ENCODE measurements at regions of chr15 and their contacts with region 1.

Region 1: GRCh38 chr15:63414474-63415120 is 33.0 kb upstream of the CA12 start:
- DNase-seq: no peak
- ATAC-seq: no peak
- H3K4me3 ChIP-seq: no peak overlapping the region
- H3K27ac ChIP-seq: no peak overlapping the region
- H3K4me1 ChIP-seq: no peaks in the 10 kb centered on the region
- H3K27me3 ChIP-seq: peaks cover 0 to 4% (median 0%) of the 10 kb centered on the region in 7 donors
- CTCF ChIP-seq: no peak

Region 2: DNA sequence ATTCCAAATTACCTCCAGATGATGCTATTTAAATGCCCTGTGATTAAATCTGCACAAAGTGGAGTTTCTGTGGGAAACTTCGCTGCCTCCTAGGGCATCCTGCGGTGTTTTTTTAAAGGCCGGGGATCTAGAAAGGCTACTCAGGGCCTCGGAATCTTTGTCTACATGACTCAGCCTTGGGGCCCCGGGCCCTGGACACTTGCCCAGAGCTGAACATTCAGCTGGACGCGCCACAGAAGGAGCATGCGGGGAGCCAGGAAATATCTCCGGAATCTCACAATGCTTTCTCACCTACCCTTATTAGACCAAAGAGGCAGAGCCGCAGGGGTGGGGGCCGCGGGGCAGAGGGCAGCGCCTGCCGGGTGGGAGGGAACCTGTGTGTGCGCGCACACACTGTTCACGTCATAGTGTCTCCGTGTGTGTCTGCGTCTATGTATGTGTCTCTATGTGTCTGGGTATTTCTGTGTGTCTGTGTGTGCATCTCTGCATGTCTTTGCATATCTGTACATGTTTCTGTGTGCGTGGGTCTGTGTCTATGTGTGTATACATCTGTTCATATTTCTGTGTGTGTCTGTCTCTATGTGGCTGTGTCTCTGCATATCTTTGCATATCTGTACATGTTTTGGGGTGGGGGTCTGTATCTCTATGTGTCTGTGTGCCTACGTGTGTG is 517.5 kb before region 1 on chr15:
- intact Hi-C with region 1: no loop called
- DNase-seq: peak; percentile 89 to 93
- ATAC-seq: peak; percentile 81 to 91 (median 86)
- H3K4me3 ChIP-seq: peak overlapping the region in 5 of 10 donors; percentile 5 to 21 (median 16)
- H3K27ac ChIP-seq: peak overlapping the region; percentile 66 to 93 (median 88)
- H3K4me1 ChIP-seq: peaks cover 10 to 76% (median 59%) of the 10 kb centered on the region in 9 donors
- H3K27me3 ChIP-seq: no peaks in the 10 kb centered on the region
- CTCF ChIP-seq: no peak

Region 3: GRCh38 chr15:63296195-63296594 is 118.4 kb before region 1 on chr15:
- intact Hi-C with region 1: no loop called
- DNase-seq: no peak
- ATAC-seq: peak in 4 of 8 donors; percentile 51 to 74 (median 61)
- H3K4me3 ChIP-seq: no peak overlapping the region
- H3K27ac ChIP-seq: no peak overlapping the region
- H3K4me1 ChIP-seq: peaks cover 0 to 21% (median 6%) of the 10 kb centered on the region in 9 donors
- H3K27me3 ChIP-seq: no peaks in the 10 kb centered on the region
- CTCF ChIP-seq: no peak

Region 4: DNA sequence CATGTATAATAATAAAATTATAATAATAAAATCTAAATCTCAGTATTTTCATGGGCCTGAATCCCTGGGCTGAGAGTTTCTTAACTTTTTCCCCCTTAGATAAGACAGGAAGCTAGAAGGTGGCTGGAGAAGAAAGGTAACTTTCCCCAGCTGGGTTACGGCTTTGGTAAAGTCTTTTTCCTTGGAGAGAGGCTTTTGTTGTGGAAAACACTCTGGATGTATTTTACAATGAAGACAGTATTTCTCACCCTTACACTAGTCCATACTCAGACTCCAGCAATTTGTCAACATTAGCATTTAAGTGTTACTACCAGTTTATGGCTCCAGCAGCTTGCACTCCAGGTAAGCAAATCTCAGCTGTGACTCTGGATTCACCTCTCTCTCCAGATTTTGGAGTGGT is 102.3 kb before region 1 on chr15:
- intact Hi-C with region 1: loop called in 1 of 10 experiments (anchors 5 kb)
- DNase-seq: no peak
- ATAC-seq: no peak
- H3K4me3 ChIP-seq: no peak overlapping the region
- H3K27ac ChIP-seq: no peak overlapping the region
- H3K4me1 ChIP-seq: peaks cover 0 to 3% (median 0%) of the 10 kb centered on the region in 9 donors
- H3K27me3 ChIP-seq: no peaks in the 10 kb centered on the region
- CTCF ChIP-seq: no peak

Region 5: GRCh38 chr15:63891079-63891767 is 476.6 kb after region 1 on chr15:
- intact Hi-C with region 1: no loop called
- DNase-seq: peak; percentile 81
- ATAC-seq: peak; percentile 70 to 91 (median 77)
- H3K4me3 ChIP-seq: no peak overlapping the region
- H3K27ac ChIP-seq: peak overlapping the region in 1 of 10 donors; percentile 36
- H3K4me1 ChIP-seq: peaks cover 0 to 76% (median 21%) of the 10 kb centered on the region in 9 donors
- H3K27me3 ChIP-seq: no peaks in the 10 kb centered on the region
- CTCF ChIP-seq: peak; percentile 80 to 92 (median 90)

Measured in heart right ventricle (tissue), 16 donors.